ENCODE measurements at regions of chr1 and their contacts with region 1.

Region 1: GRCh38 chr1:147494998-147495580 is 46.2 kb upstream of the BCL9 start:
- DNase-seq: peak; percentile 85
- ATAC-seq: peak; percentile 94 to 96

Region 2: DNA sequence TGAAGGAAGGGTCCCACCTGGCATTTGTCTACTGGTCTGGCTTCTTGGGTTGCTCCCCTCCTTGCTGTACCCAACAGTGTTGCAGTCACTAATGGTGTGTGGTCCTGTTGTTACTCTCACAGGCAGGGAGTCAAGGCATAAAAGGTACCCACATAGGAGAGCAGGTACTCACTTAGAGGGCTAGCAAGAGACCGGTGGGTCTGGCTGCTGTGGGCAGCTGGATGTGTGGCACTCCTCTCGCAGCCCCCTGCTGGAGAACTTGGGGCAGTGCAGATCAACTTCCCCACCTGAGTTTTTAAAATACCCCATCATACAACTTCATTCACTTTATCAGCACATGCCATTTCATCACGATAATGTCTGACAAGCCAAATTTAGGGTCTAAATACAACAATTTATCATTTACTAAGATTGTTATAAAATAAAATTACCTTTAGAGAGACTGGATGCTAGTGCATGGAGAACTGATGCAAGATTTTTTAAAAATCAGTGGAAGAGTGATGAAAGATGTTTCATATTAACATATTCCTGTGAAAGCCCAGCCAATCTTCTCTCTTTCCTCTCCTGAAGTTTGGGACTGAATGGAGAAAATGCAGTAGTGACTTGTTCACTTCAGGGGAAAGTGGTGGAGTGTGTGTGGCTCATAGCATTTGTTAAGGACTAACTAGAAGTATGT is 132.5 kb after region 1 on chr1:
- intact Hi-C with region 1: loop called (anchors 5 kb)
- DNase-seq: peak; percentile 57
- ATAC-seq: peak; percentile 67 to 85

Region 3: DNA sequence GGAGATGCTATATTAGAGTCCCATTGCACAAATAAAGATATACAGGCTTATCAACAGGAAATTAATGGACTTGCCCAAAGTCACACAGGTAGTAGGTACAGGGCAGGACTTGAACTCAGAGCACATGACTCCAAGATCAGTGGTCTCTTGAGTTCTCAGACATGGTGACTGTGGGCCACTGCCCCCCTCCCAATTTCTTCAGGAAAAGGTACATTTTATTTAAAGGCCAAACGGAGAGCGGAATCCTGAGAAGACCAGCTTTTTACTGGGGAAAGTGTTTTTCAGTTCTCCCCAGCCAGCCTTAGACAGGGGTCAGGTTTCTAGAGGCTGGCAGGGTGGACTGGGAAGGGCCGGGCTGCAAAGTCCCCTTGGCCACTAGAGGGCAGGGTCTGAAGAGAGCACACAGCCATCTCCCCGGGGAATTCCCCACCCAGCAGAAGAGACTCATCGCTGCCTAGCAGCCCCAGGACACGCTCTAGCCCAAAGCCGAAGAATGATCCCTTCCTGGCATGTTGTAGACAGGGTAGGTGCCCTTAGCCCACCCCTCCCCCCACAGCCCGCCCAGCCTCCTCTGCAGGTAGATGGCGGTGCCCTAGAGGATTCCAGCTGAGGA is 145.6 kb after region 1 on chr1:
- intact Hi-C with region 1: loop called (anchors 1 to 5 kb)
- DNase-seq: peak; percentile 75
- ATAC-seq: peak; percentile 92 to 96

Measured in left cardiac atrium (tissue), 4 donors.